K562 (cell line): ENCODE measurements at regions of chr17 and their contacts with region 1.

Region 1: GRCh38 chr17:30336369-30337171 is 2.7 kb upstream of the TMIGD1 start:
- DNase-seq: peak; percentile 61 to 84 (median 70)
- ATAC-seq: peak; percentile 82
- H3K4me3 ChIP-seq: no peak overlapping the region
- H3K27ac ChIP-seq: no peak overlapping the region
- H3K4me1 ChIP-seq: peaks cover 0 to 5% of the 10 kb centered on the region in 2 experiments; a peak in 1 of 5 replicates
- H3K27me3 ChIP-seq: no peaks in the 10 kb centered on the region
- CTCF ChIP-seq: peak; percentile 80 to 90 (median 85)
- EP300 ChIP-seq: 0 out of 2 replicates have a peak, but pooled peaks have one; percentile 4
- POLR2A ChIP-seq: no peak
- RAD21 ChIP-seq: peak; percentile 86 to 88

Region 2: DNA sequence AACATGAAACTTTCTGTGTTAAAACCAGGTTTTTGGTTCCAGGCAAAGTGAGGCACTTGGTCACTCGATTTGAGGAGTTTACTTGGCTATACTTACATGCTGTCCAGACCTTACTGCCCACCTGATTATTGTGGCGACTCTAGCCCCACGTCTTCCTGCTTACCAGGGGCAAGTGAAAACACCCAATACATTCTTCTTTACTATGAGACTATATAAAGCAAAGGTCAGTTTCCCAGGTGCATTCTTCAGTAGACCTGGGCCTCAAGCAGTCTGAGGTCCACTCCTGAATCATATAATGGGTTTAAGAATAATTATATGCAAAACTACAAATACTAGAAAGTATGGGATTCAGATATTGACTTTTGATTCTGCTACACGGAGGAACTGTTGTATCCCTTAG is 308.9 kb before region 1 on chr17:
- CTCF ChIA-PET with region 1: no interaction called
- POLR2A ChIA-PET with region 1: no interaction called
- in situ Hi-C with region 1: no loop called
- intact Hi-C with region 1: loop called (anchors 2 kb)
- DNase-seq: no peak
- ATAC-seq: no peak
- H3K4me3 ChIP-seq: no peak overlapping the region
- H3K27ac ChIP-seq: no peak overlapping the region
- H3K4me1 ChIP-seq: no peaks in the 10 kb centered on the region
- H3K27me3 ChIP-seq: peaks cover 3 to 7% of the 10 kb centered on the region in 2 experiments; a peak in 4 of 5 replicates
- CTCF ChIP-seq: no peak
- EP300 ChIP-seq: no peak
- POLR2A ChIP-seq: no peak
- RAD21 ChIP-seq: no peak

Region 3: DNA sequence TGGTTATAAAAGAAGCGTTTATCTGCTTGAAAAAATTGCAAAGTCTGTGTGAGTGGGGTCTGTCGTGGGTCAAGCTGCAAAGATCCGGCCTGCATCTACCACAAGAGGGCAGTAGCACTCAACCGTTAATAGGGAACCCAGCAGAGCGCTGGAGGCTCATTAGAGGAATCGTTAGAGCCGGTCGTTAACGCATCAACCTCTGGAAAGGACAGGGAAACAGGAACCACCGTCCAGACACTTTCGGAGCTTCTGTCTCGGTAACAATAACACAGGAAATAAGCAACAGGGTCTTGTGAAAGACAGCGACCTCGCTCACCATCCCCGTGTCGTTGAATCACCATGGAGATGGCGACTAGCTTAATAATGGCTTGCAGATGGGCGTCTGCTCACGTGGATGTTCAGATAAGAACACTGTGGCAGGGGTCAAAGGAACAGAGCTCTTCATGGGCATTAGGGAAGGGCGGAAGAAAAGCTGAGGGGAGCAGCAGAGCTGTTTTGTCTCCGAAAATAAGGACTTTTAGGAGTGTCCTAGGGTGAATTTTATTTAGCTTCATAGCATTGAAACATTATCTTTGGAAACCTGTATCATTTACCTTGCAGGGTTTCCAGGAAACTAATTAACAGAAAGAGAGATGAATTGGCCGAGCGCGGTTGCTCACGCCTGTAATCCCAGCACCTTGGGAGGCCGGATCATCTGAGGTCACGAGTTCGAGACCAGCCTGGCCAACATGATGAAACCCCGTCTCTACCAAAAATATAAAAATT is 231.8 kb before region 1 on chr17:
- CTCF ChIA-PET with region 1: interaction called, 10 read pairs
- POLR2A ChIA-PET with region 1: interaction called, 9 read pairs
- in situ Hi-C with region 1: loop called (anchors 5 kb)
- intact Hi-C with region 1: loop called (anchors 1 kb)
- DNase-seq: peak; percentile 82 to 93 (median 85)
- ATAC-seq: peak; percentile 99
- H3K4me3 ChIP-seq: peak overlapping the region; percentile 38
- H3K27ac ChIP-seq: peak overlapping the region; percentile 77
- H3K4me1 ChIP-seq: peaks cover 5% of the 10 kb centered on the region in 2 experiments; a peak in 3 of 5 replicates
- H3K27me3 ChIP-seq: no peaks in the 10 kb centered on the region; a peak in 1 of 5 replicates
- CTCF ChIP-seq: peak; percentile 91 to 95 (median 92)
- EP300 ChIP-seq: peak; percentile 14; the same call in 1 of the 2 replicates
- POLR2A ChIP-seq: peak; percentile 51
- RAD21 ChIP-seq: peak; percentile 89 to 93

Region 4: DNA sequence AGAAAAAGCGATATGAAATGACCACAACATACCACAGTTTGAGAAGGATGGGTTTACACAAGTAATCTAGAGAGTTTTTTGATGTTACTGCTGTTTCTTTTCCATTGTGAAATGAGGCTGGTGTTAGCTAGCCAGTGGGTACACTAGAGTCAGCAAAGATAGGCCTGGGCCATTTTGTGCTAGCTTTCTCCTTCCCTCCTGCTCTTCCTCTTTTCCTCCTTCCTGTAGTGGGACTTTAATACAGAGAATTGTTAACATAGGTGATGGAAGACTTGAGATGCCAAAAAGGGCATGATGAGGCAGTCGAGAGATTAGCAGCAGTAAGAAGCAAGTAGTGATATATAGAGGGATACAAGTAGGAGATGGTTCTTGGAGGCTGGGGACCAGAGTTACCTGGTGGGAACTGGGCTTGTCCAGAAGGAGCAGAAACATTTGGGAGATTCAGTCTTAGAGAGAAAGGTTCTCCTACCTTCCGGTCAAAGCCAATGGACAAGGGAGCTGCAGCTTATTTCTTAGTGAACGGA is 212.2 kb before region 1 on chr17:
- CTCF ChIA-PET with region 1: interaction called, 29 read pairs
- POLR2A ChIA-PET with region 1: no interaction called
- in situ Hi-C with region 1: no loop called
- intact Hi-C with region 1: no loop called
- DNase-seq: no peak
- ATAC-seq: peak; percentile 49; the same call in 2 of the 3 replicates
- H3K4me3 ChIP-seq: no peak overlapping the region
- H3K27ac ChIP-seq: 0 out of 3 replicates have a peak overlapping the region, but pooled peaks have one; percentile 3
- H3K4me1 ChIP-seq: peaks cover 0 to 2% of the 10 kb centered on the region in 2 experiments; a peak in 2 of 5 replicates
- H3K27me3 ChIP-seq: no peaks in the 10 kb centered on the region
- CTCF ChIP-seq: no peak
- EP300 ChIP-seq: no peak
- POLR2A ChIP-seq: no peak
- RAD21 ChIP-seq: no peak

Region 5: GRCh38 chr17:30203471-30203981 is 133.0 kb before region 1 on chr17:
- CTCF ChIA-PET with region 1: no interaction called
- POLR2A ChIA-PET with region 1: no interaction called
- in situ Hi-C with region 1: no loop called
- intact Hi-C with region 1: no loop called
- DNase-seq: peak; percentile 43 to 67 (median 54)
- ATAC-seq: peak; percentile 89
- H3K4me3 ChIP-seq: peak overlapping the region; percentile 14; the same call in 1 of the 2 replicates
- H3K27ac ChIP-seq: peak overlapping the region; percentile 43; the same call in 1 of the 3 replicates
- H3K4me1 ChIP-seq: peaks cover 4 to 9% of the 10 kb centered on the region in 2 experiments; a peak in 3 of 5 replicates
- H3K27me3 ChIP-seq: peaks cover 5 to 7% of the 10 kb centered on the region in 2 experiments; a peak in 3 of 5 replicates
- CTCF ChIP-seq: peak; percentile 48 to 51 (median 49)
- EP300 ChIP-seq: no peak
- POLR2A ChIP-seq: no peak
- RAD21 ChIP-seq: no peak; a peak in 1 of 4 replicates

Region 6: DNA sequence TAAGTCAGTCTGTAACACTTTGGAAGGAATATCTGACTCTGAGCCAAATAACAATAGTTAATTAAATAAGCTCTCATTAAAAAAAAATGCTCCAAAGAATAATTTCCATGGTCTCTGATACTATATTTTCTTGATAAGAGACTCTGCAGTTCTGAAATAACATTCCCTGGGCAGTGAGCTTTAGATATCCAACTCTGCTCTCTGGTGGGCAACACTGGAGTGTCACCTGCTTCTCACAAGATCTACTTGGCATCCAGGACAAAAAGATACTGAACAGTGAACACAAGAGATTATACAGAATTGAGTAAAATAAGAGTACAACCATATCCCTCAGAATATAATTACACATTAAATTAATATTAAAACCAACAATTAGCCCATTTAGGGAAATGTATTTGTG is 58.5 kb before region 1 on chr17:
- CTCF ChIA-PET with region 1: interaction called, 4 read pairs
- POLR2A ChIA-PET with region 1: no interaction called
- in situ Hi-C with region 1: no loop called
- intact Hi-C with region 1: loop called (anchors 10 kb)
- DNase-seq: peak in 1 of 4 experiments; percentile 39
- ATAC-seq: peak; percentile 73
- H3K4me3 ChIP-seq: no peak overlapping the region
- H3K27ac ChIP-seq: no peak overlapping the region
- H3K4me1 ChIP-seq: no peaks in the 10 kb centered on the region
- H3K27me3 ChIP-seq: no peaks in the 10 kb centered on the region
- CTCF ChIP-seq: peak; percentile 32 to 60 (median 45); a peak in 5 of 6 replicates
- EP300 ChIP-seq: no peak
- POLR2A ChIP-seq: no peak
- RAD21 ChIP-seq: peak; percentile 61 to 71

Region 7: DNA sequence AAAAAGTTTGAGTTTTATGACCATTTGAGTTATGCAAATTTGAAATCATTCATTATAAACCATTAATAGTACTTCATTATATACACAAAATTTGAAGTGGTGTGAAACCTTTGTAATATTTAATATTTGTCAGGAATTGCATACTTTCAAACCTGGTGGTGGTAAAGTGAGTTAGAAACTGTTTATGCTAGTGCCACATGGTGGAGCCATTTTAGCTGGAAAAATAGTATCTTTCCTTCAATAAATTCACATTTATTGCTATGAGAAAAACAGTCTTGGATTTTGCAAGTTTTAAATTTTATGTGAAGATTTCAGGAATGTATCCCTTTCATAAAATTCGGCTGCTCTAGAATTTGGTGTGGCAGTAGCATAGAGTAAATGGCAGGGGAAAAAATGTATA is 37.6 kb before region 1 on chr17:
- CTCF ChIA-PET with region 1: no interaction called
- POLR2A ChIA-PET with region 1: no interaction called
- in situ Hi-C with region 1: no loop called
- intact Hi-C with region 1: loop called (anchors 1 kb)
- DNase-seq: no peak
- ATAC-seq: no peak
- H3K4me3 ChIP-seq: no peak overlapping the region
- H3K27ac ChIP-seq: no peak overlapping the region
- H3K4me1 ChIP-seq: 0 out of 5 replicates have a peak, but pooled peaks cover 0 to 2% of the 10 kb centered on the region in 2 experiments
- H3K27me3 ChIP-seq: no peaks in the 10 kb centered on the region
- CTCF ChIP-seq: peak in 2 of 3 experiments; percentile 38 to 44; a peak in 3 of 6 replicates
- EP300 ChIP-seq: no peak
- POLR2A ChIP-seq: no peak
- RAD21 ChIP-seq: peak in 1 of 2 experiments; percentile 28; a peak in 1 of 4 replicates

Region 8: DNA sequence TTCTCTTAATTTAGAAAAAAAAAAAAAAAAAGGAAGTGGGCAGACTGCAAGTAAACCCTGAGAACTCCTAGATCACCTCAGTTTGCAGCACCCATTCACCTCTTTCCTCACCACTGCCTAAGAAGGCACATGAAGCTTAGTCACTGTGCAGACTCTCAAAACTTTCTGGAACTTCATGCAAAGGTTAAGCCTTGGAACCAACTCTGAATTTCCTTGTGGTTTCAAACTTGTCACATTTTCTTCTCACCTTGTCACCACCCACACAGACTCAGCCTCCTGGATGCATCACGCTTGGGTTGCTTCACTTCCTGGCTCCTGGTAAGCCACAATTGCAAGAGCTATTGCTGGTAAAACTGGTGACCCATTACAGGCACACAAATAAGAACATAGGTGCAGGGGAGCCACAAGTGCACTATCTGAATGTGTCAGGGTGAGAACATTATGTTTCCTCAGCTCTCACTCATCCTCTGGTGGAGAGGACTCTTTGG is 27.2 kb after region 1 on chr17:
- CTCF ChIA-PET with region 1: no interaction called
- POLR2A ChIA-PET with region 1: no interaction called
- in situ Hi-C with region 1: no loop called
- intact Hi-C with region 1: no loop called
- DNase-seq: peak in 1 of 4 experiments; percentile 41
- ATAC-seq: no peak
- H3K4me3 ChIP-seq: no peak overlapping the region
- H3K27ac ChIP-seq: no peak overlapping the region
- H3K4me1 ChIP-seq: no peaks in the 10 kb centered on the region; a peak in 1 of 5 replicates
- H3K27me3 ChIP-seq: peaks cover under 1 to 7% of the 10 kb centered on the region in 2 experiments; a peak in 3 of 5 replicates
- CTCF ChIP-seq: no peak
- EP300 ChIP-seq: no peak
- POLR2A ChIP-seq: no peak
- RAD21 ChIP-seq: no peak

Region 9: DNA sequence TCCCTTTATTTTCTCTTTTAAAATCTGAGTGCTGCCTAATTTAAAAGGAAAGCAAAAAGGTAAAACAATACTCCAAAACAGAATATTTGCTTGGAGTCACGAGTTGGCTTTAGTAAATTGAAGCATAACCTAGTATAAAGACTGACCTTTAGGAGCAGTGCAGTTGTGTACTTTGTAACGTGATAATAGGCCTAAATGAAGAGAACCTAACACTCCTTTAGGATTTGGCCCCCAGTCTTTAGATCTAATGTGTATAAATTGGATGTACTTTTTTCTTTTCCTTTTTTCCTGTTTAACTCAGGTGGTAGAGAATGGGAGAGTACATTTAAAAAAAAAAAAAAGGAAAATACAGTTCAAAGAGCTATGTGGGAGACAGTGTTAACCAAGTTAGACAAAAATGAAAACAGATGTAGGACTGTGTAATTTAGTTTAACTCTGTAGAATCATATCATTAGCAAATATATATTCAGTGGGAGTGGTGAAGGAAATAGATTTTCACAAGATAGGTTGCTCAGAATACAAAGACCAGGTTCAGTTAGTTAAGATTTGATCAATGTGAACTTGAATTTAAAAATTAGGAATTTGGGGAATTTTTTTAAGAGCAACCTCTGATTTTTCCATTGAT is 58.9 kb after region 1 on chr17:
- CTCF ChIA-PET with region 1: no interaction called
- POLR2A ChIA-PET with region 1: no interaction called
- in situ Hi-C with region 1: no loop called
- intact Hi-C with region 1: no loop called
- DNase-seq: no peak
- ATAC-seq: no peak
- H3K4me3 ChIP-seq: no peak overlapping the region
- H3K27ac ChIP-seq: no peak overlapping the region
- H3K4me1 ChIP-seq: peaks cover 0 to 7% of the 10 kb centered on the region in 2 experiments; a peak in 2 of 5 replicates
- H3K27me3 ChIP-seq: no peaks in the 10 kb centered on the region
- CTCF ChIP-seq: no peak
- EP300 ChIP-seq: no peak
- POLR2A ChIP-seq: no peak
- RAD21 ChIP-seq: no peak

Region 10: GRCh38 chr17:30413109-30413508 is 76.5 kb after region 1 on chr17:
- CTCF ChIA-PET with region 1: no interaction called
- POLR2A ChIA-PET with region 1: no interaction called
- in situ Hi-C with region 1: no loop called
- intact Hi-C with region 1: no loop called
- DNase-seq: no peak
- ATAC-seq: no peak
- H3K4me3 ChIP-seq: no peak overlapping the region
- H3K27ac ChIP-seq: no peak overlapping the region
- H3K4me1 ChIP-seq: no peaks in the 10 kb centered on the region; a peak in 1 of 5 replicates
- H3K27me3 ChIP-seq: no peaks in the 10 kb centered on the region
- CTCF ChIP-seq: no peak
- EP300 ChIP-seq: no peak
- POLR2A ChIP-seq: no peak
- RAD21 ChIP-seq: no peak

Region 11: DNA sequence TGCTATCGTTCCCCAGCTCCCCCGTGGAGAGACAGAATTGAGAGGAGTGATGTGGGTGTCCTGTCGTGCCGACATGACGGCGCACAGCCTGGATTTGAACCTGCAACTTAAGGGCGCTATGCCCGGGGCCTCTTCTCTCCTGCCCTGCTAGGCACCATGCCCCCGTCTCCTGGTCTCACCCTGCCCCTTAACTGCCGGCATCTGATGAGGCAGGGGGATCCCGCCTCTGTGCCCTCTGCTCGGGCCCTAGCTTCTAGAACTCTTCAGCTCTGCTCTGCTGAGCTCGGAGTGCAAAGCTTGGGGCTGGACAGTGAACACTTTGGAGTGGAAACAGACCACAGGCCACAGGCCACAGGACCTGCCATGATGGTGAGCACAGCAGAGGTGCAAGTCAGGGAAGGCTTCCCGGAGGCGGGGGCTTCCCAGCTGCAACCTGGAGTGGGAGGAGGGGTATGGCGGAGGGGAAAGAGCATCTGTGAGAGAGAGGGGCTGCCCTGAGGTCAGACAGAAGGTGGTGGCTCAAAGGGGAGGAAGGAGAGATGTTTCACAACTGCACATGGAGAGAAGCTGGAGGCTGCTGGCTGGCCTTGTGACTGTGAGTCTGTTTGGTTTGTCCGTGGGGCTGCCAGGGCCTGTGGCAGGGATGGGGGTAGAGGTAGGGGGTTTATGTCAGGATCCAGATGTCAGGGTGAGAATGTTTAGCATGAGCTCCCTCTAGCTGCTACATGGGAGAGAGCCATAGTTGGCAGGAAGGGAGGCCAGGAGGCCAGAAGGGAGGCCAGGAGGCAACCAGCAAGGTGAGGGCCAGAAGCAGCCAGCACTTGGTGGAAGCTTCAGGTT is 380.1 kb after region 1 on chr17:
- CTCF ChIA-PET with region 1: interaction called, 3 read pairs
- POLR2A ChIA-PET with region 1: no interaction called
- in situ Hi-C with region 1: loop called (anchors 25 kb)
- intact Hi-C with region 1: loop called (anchors 5 kb)
- DNase-seq: no peak
- ATAC-seq: peak; percentile 15; the same call in 1 of the 3 replicates
- H3K4me3 ChIP-seq: no peak overlapping the region
- H3K27ac ChIP-seq: no peak overlapping the region
- H3K4me1 ChIP-seq: peaks cover 0 to 20% of the 10 kb centered on the region in 2 experiments; a peak in 3 of 5 replicates
- H3K27me3 ChIP-seq: no peaks in the 10 kb centered on the region
- CTCF ChIP-seq: peak; percentile 30 to 36 (median 31); a peak in 5 of 6 replicates
- EP300 ChIP-seq: no peak
- POLR2A ChIP-seq: no peak
- RAD21 ChIP-seq: peak in 1 of 2 experiments; percentile 31; a peak in 2 of 4 replicates